ENCODE measurements at regions of chr14 and their contacts with region 1.

Region 1: DNA sequence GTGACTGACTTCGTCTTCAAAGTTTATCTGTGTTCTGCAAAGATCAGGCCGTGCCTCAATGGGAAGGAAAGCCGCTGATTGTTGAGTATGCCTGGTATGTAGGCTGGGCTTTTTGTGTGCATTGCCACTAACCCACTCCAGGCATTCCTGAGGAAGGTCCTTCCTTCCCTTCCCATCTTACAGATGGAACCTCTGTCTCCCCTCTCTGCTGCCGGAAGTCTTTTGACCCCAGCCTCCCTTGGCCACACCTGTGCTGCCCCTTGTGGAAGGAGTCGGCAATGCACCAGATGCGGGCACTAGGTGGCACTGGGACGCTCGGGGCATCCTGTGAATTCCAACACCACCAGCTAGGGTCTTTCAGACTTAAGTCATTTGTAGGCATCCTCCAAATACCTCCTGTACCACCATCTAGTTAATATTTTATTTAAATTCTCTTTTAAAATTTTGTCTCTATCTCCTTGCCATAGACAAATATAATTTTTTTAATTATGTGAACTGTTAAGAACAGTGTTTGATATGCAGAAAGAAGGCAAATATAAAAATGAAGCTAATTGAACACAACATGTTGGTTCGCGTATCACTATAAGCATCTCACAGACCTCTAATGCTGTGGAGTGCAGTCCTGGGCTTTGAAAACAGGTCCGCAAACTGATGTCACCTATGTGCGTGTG is 99.5 kb downstream of the RIN3 start:
- DNase-seq: peak; percentile 51 to 97
- H3K4me3 ChIP-seq: no peak overlapping the region
- H3K27ac ChIP-seq: no peak overlapping the region
- H3K4me1 ChIP-seq: no peaks in the 10 kb centered on the region
- H3K27me3 ChIP-seq: no peaks in the 10 kb centered on the region
- CTCF ChIP-seq: peak; percentile 98 to 100 (median 99)
- EP300 ChIP-seq: 0 out of 3 replicates have a peak, but pooled peaks of 1 of the 2 experiments have one; percentile 24
- POLR2A ChIP-seq: no peak
- RAD21 ChIP-seq: peak; percentile 80 to 86

Region 2: GRCh38 chr14:92397150-92397952 is 215.8 kb before region 1 on chr14:
- CTCF ChIA-PET with region 1: no interaction called
- POLR2A ChIA-PET with region 1: no interaction called
- DNase-seq: no peak
- H3K4me3 ChIP-seq: peak overlapping the region in 1 of 4 experiments; percentile 1; a peak in 1 of 8 replicates
- H3K27ac ChIP-seq: no peak overlapping the region
- H3K4me1 ChIP-seq: peaks cover 6 to 22% (median 9%) of the 10 kb centered on the region in 4 experiments; a peak in 6 of 7 replicates
- H3K27me3 ChIP-seq: no peaks in the 10 kb centered on the region
- CTCF ChIP-seq: no peak
- EP300 ChIP-seq: no peak
- POLR2A ChIP-seq: no peak
- RAD21 ChIP-seq: no peak

Region 3: GRCh38 chr14:92417759-92418158 is 195.4 kb before region 1 on chr14:
- CTCF ChIA-PET with region 1: no interaction called
- POLR2A ChIA-PET with region 1: no interaction called
- DNase-seq: no peak
- H3K4me3 ChIP-seq: no peak overlapping the region
- H3K27ac ChIP-seq: no peak overlapping the region
- H3K4me1 ChIP-seq: no peaks in the 10 kb centered on the region
- H3K27me3 ChIP-seq: no peaks in the 10 kb centered on the region
- CTCF ChIP-seq: no peak
- EP300 ChIP-seq: no peak
- POLR2A ChIP-seq: no peak
- RAD21 ChIP-seq: no peak

Region 4: GRCh38 chr14:92596331-92596911 is 16.7 kb before region 1 on chr14:
- CTCF ChIA-PET with region 1: interaction called, 37 read pairs
- POLR2A ChIA-PET with region 1: interaction called, 3 read pairs
- DNase-seq: no peak
- H3K4me3 ChIP-seq: no peak overlapping the region
- H3K27ac ChIP-seq: no peak overlapping the region
- H3K4me1 ChIP-seq: no peaks in the 10 kb centered on the region
- H3K27me3 ChIP-seq: no peaks in the 10 kb centered on the region; a peak in 1 of 7 replicates
- CTCF ChIP-seq: peak; percentile 56 to 68 (median 56)
- EP300 ChIP-seq: no peak
- POLR2A ChIP-seq: no peak
- RAD21 ChIP-seq: peak; percentile 59 to 71

Region 5: GRCh38 chr14:92625213-92625612 is 12.1 kb after region 1 on chr14:
- CTCF ChIA-PET with region 1: interaction called, 38 read pairs
- POLR2A ChIA-PET with region 1: no interaction called
- DNase-seq: no peak
- H3K4me3 ChIP-seq: no peak overlapping the region
- H3K27ac ChIP-seq: no peak overlapping the region
- H3K4me1 ChIP-seq: peaks cover 0 to 19% (median 8%) of the 10 kb centered on the region in 4 experiments; a peak in 3 of 7 replicates
- H3K27me3 ChIP-seq: no peaks in the 10 kb centered on the region
- CTCF ChIP-seq: no peak
- EP300 ChIP-seq: no peak
- POLR2A ChIP-seq: no peak
- RAD21 ChIP-seq: no peak

Region 6: GRCh38 chr14:92630367-92630766 is 17.2 kb after region 1 on chr14:
- CTCF ChIA-PET with region 1: interaction called, 38 read pairs
- POLR2A ChIA-PET with region 1: no interaction called
- DNase-seq: no peak
- H3K4me3 ChIP-seq: no peak overlapping the region
- H3K27ac ChIP-seq: no peak overlapping the region
- H3K4me1 ChIP-seq: peaks cover 0 to 19% (median 8%) of the 10 kb centered on the region in 4 experiments; a peak in 3 of 7 replicates
- H3K27me3 ChIP-seq: no peaks in the 10 kb centered on the region; a peak in 1 of 7 replicates
- CTCF ChIP-seq: no peak
- EP300 ChIP-seq: no peak
- POLR2A ChIP-seq: no peak
- RAD21 ChIP-seq: no peak

Region 7: DNA sequence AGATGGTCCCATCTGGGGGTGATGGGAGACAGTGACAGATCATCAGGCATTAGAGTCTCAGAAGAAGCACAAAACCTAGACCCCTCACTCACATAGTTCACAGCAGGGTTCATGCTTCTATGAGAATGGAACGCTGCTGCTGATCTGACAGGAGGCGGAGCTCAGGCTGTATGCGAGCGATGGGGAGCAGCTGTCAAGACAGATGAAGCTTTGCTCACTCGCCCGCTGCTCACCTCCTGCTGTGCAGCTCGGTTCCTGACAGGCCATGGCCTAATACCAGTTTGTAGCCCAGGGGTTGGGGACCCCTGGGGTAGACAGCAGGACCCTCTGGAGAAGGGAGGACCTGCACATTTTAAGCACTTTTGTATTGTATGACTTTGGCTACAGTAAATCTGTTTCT is 24.1 kb after region 1 on chr14:
- CTCF ChIA-PET with region 1: interaction called, 28 read pairs
- POLR2A ChIA-PET with region 1: no interaction called
- DNase-seq: no peak
- H3K4me3 ChIP-seq: no peak overlapping the region
- H3K27ac ChIP-seq: no peak overlapping the region
- H3K4me1 ChIP-seq: peaks cover 0 to 2% (median under 1%) of the 10 kb centered on the region in 4 experiments; a peak in 1 of 7 replicates
- H3K27me3 ChIP-seq: no peaks in the 10 kb centered on the region; a peak in 1 of 7 replicates
- CTCF ChIP-seq: no peak
- EP300 ChIP-seq: no peak
- POLR2A ChIP-seq: no peak
- RAD21 ChIP-seq: no peak

Measured in H1 (cell line).